Psoas muscle (tissue), 8 donors: ENCODE measurements at regions of chr4 and their contacts with region 1.

Region 1: GRCh38 chr4:37686373-37687193 is at the start of gene RELL1:
- DNase-seq: peak; percentile 99 to 100
- ATAC-seq: peak; percentile 93 to 97 (median 94)
- H3K4me3 ChIP-seq: peak within 1 kb of the TSS; percentile 98
- H3K27ac ChIP-seq: peak within 1 kb of the TSS; percentile 99
- H3K4me1 ChIP-seq: peaks cover 31% of the 10 kb centered on the region
- H3K27me3 ChIP-seq: no peaks in the 10 kb centered on the region
- CTCF ChIP-seq: no peak
- total RNA-seq, gene RELL1: 21.0 to 35.7 (median 25.1) TPM

Region 2: DNA sequence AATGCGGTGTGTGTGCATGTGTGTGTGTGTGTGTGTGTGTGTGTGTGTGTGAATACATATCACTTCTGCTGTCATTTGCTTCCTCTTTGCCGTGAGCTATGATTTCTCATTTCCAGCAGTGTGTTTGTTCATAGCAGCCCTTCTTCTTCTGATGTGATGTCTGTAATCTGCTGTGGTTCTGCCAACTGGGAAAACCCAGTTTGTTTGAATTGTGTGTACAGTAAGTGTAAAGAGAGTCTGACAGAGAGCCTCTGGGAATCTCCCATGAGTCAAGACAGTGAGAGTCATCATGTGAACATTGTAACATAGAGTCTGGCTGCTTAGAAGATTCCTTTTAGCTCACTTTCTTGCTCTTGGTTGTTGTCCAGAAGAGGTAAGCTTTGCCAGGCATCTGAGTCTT is 450.4 kb before region 1 on chr4:
- intact Hi-C with region 1: no loop called
- DNase-seq: no peak
- ATAC-seq: no peak
- H3K4me3 ChIP-seq: no peak overlapping the region
- H3K27ac ChIP-seq: no peak overlapping the region
- H3K4me1 ChIP-seq: no peaks in the 10 kb centered on the region
- H3K27me3 ChIP-seq: no peaks in the 10 kb centered on the region
- CTCF ChIP-seq: no peak

Region 3: DNA sequence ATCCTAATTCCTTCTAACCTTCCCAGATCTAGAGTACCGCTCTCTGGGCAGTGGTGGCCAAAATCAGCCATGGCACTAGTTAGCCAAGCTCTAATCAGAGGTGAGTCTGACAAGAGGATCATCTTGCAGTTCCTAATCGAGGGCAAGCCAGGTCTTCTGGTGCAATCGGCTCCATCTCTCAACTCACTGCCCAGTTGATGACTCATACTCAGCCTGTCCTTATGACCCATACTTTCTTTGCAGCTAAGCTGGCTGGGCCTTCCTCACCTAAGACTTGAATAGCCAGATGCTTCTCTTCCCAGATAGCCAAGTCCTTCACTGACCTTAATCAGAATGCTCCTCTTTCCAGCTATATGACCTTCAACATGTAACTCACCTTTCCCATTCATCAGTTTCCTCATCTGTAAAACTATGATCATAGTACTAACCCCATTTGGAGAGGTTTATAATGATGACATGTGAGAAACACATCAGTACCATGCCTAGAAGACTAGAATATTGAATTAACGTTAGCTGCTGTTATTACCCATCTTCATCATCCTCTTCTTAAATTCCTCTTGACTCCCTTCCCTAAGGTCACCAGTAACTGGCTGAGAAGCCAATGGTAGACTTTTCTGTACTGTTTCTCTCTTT is 57.5 kb before region 1 on chr4:
- intact Hi-C with region 1: loop called (anchors 5 kb)
- DNase-seq: peak; percentile 64 to 81
- ATAC-seq: peak; percentile 99 to 100 (median 100)
- H3K4me3 ChIP-seq: no peak overlapping the region
- H3K27ac ChIP-seq: peak overlapping the region; percentile 40
- H3K4me1 ChIP-seq: peaks cover 28% of the 10 kb centered on the region
- H3K27me3 ChIP-seq: no peaks in the 10 kb centered on the region
- CTCF ChIP-seq: no peak

Region 4: GRCh38 chr4:37648096-37648817 is 38.3 kb before region 1 on chr4:
- intact Hi-C with region 1: loop called in 1 of 2 experiments (anchors 5 kb)
- DNase-seq: peak; percentile 58 to 82
- ATAC-seq: peak; percentile 98 to 99 (median 98)
- H3K4me3 ChIP-seq: no peak overlapping the region
- H3K27ac ChIP-seq: peak overlapping the region; percentile 62
- H3K4me1 ChIP-seq: peaks cover 18% of the 10 kb centered on the region
- H3K27me3 ChIP-seq: no peaks in the 10 kb centered on the region
- CTCF ChIP-seq: no peak